B cell (primary cell): ENCODE measurements at regions of chr1 and their contacts with region 1.

Region 1: GRCh38 chr1:107883562-107883961 is 81.4 kb downstream of the VAV3 start:
- DNase-seq: no peak
- ATAC-seq: peak; percentile 33
- H3K4me3 ChIP-seq: no peak overlapping the region
- H3K4me3 Mint-ChIP-seq: no peak overlapping the region
- H3K27ac ChIP-seq: no peak overlapping the region
- H3K27ac Mint-ChIP-seq: no peak overlapping the region
- H3K4me1 ChIP-seq: peaks cover 15 to 21% of the 10 kb centered on the region in 2 donors
- H3K4me1 Mint-ChIP-seq: peaks cover 63% of the 10 kb centered on the region
- H3K27me3 ChIP-seq: no peaks in the 10 kb centered on the region
- H3K27me3 Mint-ChIP-seq: no peaks in the 10 kb centered on the region
- CTCF ChIP-seq: no peak

Region 2: DNA sequence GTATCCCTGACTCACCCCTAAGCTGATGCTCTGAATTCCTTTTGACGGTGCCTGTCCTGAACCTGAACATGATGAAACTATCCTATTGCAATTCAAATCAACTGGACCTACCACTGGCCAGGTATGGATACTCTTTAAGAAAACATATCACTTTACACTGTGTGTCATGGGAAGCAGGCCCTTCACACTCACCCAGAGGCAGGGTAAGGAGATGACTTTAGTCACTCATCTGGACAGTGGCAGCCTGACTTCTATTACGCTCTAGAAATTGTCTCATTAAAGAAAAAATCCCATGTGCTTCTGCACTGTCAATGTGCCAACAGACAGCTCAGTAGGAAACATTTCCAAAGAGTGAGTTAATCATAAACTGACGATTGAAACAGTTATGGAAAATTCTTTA is 12.9 kb before region 1 on chr1:
- CTCF ChIA-PET with region 1: interaction called, 4 read pairs
- POLR2A ChIA-PET with region 1: interaction called, 5 read pairs
- intact Hi-C with region 1: loop called (anchors 1 kb)
- DNase-seq: no peak
- ATAC-seq: no peak
- H3K4me3 ChIP-seq: no peak overlapping the region
- H3K4me3 Mint-ChIP-seq: peak overlapping the region; percentile 10
- H3K27ac ChIP-seq: peak overlapping the region; percentile 23 to 86
- H3K27ac Mint-ChIP-seq: peak overlapping the region; percentile 61
- H3K4me1 ChIP-seq: peaks cover 61 to 74% of the 10 kb centered on the region in 2 donors
- H3K4me1 Mint-ChIP-seq: peaks cover 90% of the 10 kb centered on the region
- H3K27me3 ChIP-seq: no peaks in the 10 kb centered on the region
- H3K27me3 Mint-ChIP-seq: no peaks in the 10 kb centered on the region
- CTCF ChIP-seq: no peak